Right cardiac atrium (tissue), 5 donors: ENCODE measurements at regions of chr7 and their contacts with region 1.

Region 1: GRCh38 chr7:74206589-74207120 is 3.2 kb upstream of the LAT2 start:
- DNase-seq: peak; percentile 86 to 95 (median 94)
- ATAC-seq: peak; percentile 74 to 86
- H3K4me3 ChIP-seq: no peak overlapping the region
- H3K27ac ChIP-seq: no peak overlapping the region
- H3K4me1 ChIP-seq: no peaks in the 10 kb centered on the region
- H3K27me3 ChIP-seq: no peaks in the 10 kb centered on the region

Region 2: GRCh38 chr7:73865738-73866445 is 340.8 kb before region 1 on chr7:
- intact Hi-C with region 1: loop called in 2 of 4 experiments (anchors 10 kb)
- DNase-seq: peak; percentile 63 to 73 (median 69)
- ATAC-seq: peak; percentile 60 to 76
- H3K4me3 ChIP-seq: no peak overlapping the region
- H3K27ac ChIP-seq: no peak overlapping the region
- H3K4me1 ChIP-seq: no peaks in the 10 kb centered on the region
- H3K27me3 ChIP-seq: no peaks in the 10 kb centered on the region

Region 3: DNA sequence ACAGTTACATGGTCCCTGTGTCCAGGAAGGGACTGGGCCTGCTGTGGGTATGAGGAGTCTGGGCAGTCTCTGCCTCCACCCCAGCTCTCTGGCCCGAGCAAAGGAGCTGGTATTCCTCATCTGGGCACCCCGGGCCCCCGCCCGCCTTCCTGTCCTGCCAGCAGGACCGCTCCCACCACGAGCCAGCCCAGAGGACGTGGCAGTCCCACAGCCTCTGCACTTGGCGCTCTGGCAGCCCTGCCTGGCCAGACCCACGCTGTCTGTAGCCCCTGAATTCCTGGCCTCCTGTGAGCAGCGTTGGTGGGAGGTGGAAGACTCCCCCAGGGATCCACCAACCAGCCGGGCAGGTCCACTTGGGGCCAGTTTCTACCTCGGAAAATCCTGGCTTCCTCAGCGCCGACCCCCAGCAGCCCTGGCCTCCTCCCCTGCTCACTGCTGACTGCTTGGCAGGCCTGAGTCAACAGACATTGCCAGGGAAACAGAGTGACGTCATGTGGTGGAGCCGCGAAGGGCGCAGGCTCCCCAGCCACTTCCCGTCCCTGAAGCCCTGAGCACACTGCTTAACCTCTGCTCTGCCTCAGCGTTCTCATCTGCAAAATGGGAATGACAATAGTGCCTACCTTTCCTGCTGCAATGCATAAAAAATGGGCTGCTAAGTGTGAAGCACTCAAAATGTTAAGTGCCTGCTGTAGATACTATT is 144.7 kb before region 1 on chr7:
- intact Hi-C with region 1: loop called in 2 of 4 experiments (anchors 10 kb)
- DNase-seq: peak; percentile 89 to 92 (median 91)
- ATAC-seq: peak; percentile 92 to 93
- H3K4me3 ChIP-seq: no peak overlapping the region
- H3K27ac ChIP-seq: peak overlapping the region; percentile 50
- H3K4me1 ChIP-seq: no peaks in the 10 kb centered on the region
- H3K27me3 ChIP-seq: no peaks in the 10 kb centered on the region